MCF 10A (cell line): ENCODE measurements at regions of chr12 and their contacts with region 1.

Region 1: DNA sequence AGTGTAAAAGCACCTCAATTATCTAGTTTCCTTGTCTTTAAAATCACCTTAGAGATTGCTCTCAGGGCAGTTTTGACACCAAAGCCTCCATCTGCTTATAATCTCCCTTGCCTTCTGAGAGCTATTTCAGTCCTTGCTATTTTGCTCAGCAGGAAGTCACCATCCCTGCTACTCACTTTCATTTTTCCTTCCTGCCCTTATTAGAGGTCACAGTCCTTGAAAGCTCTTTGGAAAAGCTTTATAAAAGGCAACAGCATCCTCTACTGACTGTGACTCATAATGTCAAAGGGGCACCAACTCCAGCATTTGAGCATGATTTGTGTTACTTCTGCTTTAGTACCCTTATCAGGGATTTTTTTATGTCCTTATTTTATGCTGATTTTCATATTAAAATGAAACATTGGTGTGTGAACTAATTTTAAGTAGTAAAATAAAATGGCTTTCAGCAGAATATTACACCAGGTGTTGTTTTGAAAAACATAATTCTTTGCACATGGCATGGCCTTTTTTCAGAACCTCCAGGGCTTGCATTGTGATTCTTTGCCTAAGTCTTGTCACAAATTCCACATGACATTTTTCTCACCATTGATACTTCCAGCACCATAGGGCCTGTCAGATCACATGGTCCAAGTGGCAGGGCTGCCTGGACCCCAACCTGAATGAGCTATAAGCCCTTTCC is 213.0 kb downstream of the ADAMTS20 start:
- DNase-seq: peak; percentile 64
- H3K4me3 Mint-ChIP-seq: no peak overlapping the region
- H3K27ac Mint-ChIP-seq: no peak overlapping the region
- H3K4me1 Mint-ChIP-seq: peaks cover 12% of the 10 kb centered on the region
- H3K27me3 Mint-ChIP-seq: no peaks in the 10 kb centered on the region
- CTCF ChIP-seq: peak; percentile 55

Region 2: DNA sequence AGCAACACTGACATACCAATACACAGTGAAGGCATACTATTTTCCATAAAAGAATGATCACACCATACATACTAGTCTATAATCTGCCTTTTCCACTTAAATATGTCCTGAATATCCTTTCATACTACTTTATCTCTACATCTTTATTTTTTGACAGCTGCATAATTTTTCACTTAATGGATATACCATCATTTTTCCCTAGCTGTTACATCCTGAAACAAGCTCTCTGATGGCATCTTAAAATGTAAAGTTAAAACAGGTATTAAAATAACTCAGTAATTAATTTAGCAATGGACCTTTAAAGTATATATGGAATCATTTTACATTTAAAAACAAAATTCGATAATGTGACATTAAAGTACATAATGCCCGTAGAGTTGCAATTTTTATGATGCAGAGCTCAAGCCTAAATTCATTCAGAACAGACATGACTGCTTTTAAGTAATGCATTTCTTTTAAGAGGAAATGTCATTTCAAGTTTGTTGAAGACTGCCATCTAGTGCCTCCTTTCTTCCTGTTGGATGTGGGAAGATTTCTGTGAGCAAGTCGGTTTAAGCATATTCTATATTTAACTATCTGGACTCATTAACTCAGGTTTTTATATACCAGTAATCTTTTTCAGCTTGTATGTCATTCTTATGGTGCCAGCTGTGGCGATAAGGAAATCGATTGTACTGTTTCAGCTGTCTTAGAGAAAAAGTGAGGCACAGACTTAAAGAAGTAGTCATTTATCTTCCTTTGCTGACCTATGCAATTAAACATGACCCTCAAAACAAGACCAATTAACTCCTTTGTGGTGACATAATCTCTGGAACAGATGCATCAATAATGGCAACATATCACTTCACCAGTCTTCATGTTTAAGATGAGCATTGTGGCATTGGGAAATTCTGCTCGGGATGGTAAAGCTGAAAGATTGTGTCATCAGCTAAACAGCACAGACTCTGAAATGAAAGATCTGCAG is 769.8 kb before region 1 on chr12:
- CTCF ChIA-PET with region 1: interaction called, 9 read pairs
- POLR2A ChIA-PET with region 1: no interaction called
- intact Hi-C with region 1: loop called (anchors 5 kb)
- DNase-seq: peak; percentile 58
- H3K4me3 Mint-ChIP-seq: no peak overlapping the region
- H3K27ac Mint-ChIP-seq: no peak overlapping the region
- H3K4me1 Mint-ChIP-seq: peaks cover 6% of the 10 kb centered on the region
- H3K27me3 Mint-ChIP-seq: no peaks in the 10 kb centered on the region
- CTCF ChIP-seq: peak; percentile 57

Region 3: DNA sequence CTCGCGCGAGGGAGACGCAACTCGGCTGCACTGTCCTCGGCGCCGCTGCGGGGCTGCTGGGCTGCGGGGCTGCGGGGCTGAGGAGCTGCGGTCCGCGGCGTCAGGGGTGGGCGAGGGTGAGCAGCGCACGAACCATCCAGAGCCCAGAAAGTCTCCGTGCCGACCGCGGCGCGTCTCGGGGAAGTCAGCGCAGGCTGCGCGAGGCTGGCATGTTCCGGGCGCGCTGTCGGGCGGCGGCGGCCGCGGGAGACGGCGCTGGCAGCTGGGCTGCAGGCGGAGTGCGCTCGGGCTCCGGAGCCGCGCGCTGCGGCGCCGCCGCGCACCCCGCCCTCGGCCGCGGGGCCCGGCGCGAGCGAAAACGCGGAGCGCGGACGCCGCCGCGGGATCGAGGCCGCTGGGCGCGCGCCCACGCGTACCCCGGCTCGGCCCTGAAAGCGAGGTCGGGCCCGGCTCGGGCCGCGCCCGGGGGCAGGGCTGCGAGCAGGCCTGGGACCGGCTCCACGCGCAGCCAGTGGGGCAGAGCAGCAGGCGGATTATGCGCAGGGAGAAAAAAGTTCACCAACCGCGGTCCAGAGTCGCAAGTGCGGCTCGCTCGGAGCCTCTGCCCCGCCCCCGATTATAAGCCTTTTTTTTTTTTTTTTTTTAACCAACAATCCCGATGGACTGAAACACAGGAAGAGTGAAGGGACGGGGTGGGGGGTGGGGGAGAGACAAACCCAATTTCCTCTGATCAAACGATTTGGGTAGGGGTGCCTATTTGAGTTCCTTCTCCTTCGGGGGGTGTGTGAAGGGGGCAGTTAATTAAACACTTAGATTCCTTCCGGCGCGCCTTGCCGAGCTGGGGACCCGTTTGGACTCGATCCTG is 749.3 kb before region 1 on chr12 and contains the start of gene PRICKLE1:
- CTCF ChIA-PET with region 1: interaction called, 4 read pairs
- POLR2A ChIA-PET with region 1: interaction called, 3 read pairs
- intact Hi-C with region 1: loop called (anchors 1 kb)
- DNase-seq: peak; percentile 54
- H3K4me3 Mint-ChIP-seq: peak within 1 kb of the TSS; percentile 81
- H3K27ac Mint-ChIP-seq: peak within 1 kb of the TSS; percentile 76
- H3K4me1 Mint-ChIP-seq: peaks cover 30% of the 10 kb centered on the region
- H3K27me3 Mint-ChIP-seq: no peaks in the 10 kb centered on the region
- CTCF ChIP-seq: no peak
- total RNA-seq, gene PRICKLE1: 7.9 and 14.1 TPM in 2 replicates

Region 4: GRCh38 chr12:42790761-42791151 is 548.2 kb before region 1 on chr12:
- CTCF ChIA-PET with region 1: no interaction called
- POLR2A ChIA-PET with region 1: no interaction called
- intact Hi-C with region 1: loop called (anchors 10 kb)
- DNase-seq: peak; percentile 39
- H3K4me3 Mint-ChIP-seq: no peak overlapping the region
- H3K27ac Mint-ChIP-seq: no peak overlapping the region
- H3K4me1 Mint-ChIP-seq: peaks cover 20% of the 10 kb centered on the region
- H3K27me3 Mint-ChIP-seq: no peaks in the 10 kb centered on the region
- CTCF ChIP-seq: no peak

Region 5: GRCh38 chr12:43273467-43273866 is 65.5 kb before region 1 on chr12:
- CTCF ChIA-PET with region 1: no interaction called
- POLR2A ChIA-PET with region 1: no interaction called
- intact Hi-C with region 1: no loop called
- DNase-seq: peak; percentile 10
- H3K4me3 Mint-ChIP-seq: no peak overlapping the region
- H3K27ac Mint-ChIP-seq: no peak overlapping the region
- H3K4me1 Mint-ChIP-seq: peaks cover 17% of the 10 kb centered on the region
- H3K27me3 Mint-ChIP-seq: no peaks in the 10 kb centered on the region
- CTCF ChIP-seq: no peak

Region 6: DNA sequence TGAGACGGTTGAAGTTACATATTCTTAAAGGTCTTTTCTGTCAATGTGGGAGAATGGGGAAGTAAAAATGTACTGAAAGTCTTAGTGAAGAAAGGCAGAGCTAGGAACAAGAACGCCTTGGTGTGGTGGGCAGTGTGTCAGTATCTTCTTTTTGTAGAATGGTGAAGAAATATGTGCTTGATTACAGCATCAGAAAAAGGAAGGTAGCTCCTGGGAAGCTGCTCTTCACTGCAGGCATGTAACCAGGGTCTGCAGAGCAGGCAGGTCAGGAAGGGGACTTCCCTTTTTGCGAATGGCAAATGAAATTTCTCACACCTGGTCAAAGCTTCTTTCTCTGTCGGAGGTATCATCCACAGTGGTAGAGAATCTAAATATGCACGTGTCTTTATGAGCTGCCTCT is 13.2 kb before region 1 on chr12:
- CTCF ChIA-PET with region 1: interaction called, 13 read pairs
- POLR2A ChIA-PET with region 1: no interaction called
- intact Hi-C with region 1: no loop called
- DNase-seq: no peak
- H3K4me3 Mint-ChIP-seq: no peak overlapping the region
- H3K27ac Mint-ChIP-seq: no peak overlapping the region
- H3K4me1 Mint-ChIP-seq: no peaks in the 10 kb centered on the region
- H3K27me3 Mint-ChIP-seq: no peaks in the 10 kb centered on the region
- CTCF ChIP-seq: no peak

Region 7: GRCh38 chr12:43349863-43350262 is 10.9 kb after region 1 on chr12:
- CTCF ChIA-PET with region 1: interaction called, 16 read pairs
- POLR2A ChIA-PET with region 1: no interaction called
- intact Hi-C with region 1: no loop called
- DNase-seq: peak; percentile 29
- H3K4me3 Mint-ChIP-seq: no peak overlapping the region
- H3K27ac Mint-ChIP-seq: no peak overlapping the region
- H3K4me1 Mint-ChIP-seq: no peaks in the 10 kb centered on the region
- H3K27me3 Mint-ChIP-seq: peaks cover 46% of the 10 kb centered on the region
- CTCF ChIP-seq: peak; percentile 50

Region 8: GRCh38 chr12:43459285-43459684 is 120.3 kb after region 1 on chr12:
- CTCF ChIA-PET with region 1: no interaction called
- POLR2A ChIA-PET with region 1: no interaction called
- intact Hi-C with region 1: no loop called
- DNase-seq: no peak
- H3K4me3 Mint-ChIP-seq: no peak overlapping the region
- H3K27ac Mint-ChIP-seq: no peak overlapping the region
- H3K4me1 Mint-ChIP-seq: no peaks in the 10 kb centered on the region
- H3K27me3 Mint-ChIP-seq: peaks cover 25% of the 10 kb centered on the region
- CTCF ChIP-seq: no peak

Region 9: DNA sequence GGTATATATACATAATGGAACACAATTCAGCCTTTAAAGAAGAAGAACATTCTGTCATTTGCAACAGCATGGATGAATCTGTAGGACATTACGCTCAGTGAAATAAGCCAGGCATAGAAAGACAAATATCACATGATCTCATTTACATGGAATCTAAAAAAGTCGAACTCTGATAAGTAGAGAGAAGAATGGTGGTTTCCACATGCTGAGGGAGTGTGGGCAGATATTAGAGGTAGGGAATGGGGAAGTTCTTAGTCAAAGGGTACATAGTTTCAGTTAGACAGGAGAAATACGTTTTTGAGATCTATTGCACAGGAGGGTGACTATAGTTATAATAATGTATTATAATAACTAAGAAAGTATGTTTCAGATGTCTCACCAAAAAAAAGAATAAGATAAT is 141.6 kb after region 1 on chr12:
- CTCF ChIA-PET with region 1: no interaction called
- POLR2A ChIA-PET with region 1: no interaction called
- intact Hi-C with region 1: no loop called
- DNase-seq: no peak
- H3K4me3 Mint-ChIP-seq: no peak overlapping the region
- H3K27ac Mint-ChIP-seq: no peak overlapping the region
- H3K4me1 Mint-ChIP-seq: no peaks in the 10 kb centered on the region
- H3K27me3 Mint-ChIP-seq: peaks cover 28% of the 10 kb centered on the region
- CTCF ChIP-seq: no peak

Region 10: GRCh38 chr12:43551971-43552559 is 213.1 kb after region 1 on chr12 and contains the start of gene ADAMTS20:
- CTCF ChIA-PET with region 1: no interaction called
- POLR2A ChIA-PET with region 1: no interaction called
- intact Hi-C with region 1: no loop called
- DNase-seq: no peak
- H3K4me3 Mint-ChIP-seq: no peak within 1 kb of the TSS
- H3K27ac Mint-ChIP-seq: no peak within 1 kb of the TSS
- H3K4me1 Mint-ChIP-seq: no peaks in the 10 kb centered on the region
- H3K27me3 Mint-ChIP-seq: peaks cover 24% of the 10 kb centered on the region
- CTCF ChIP-seq: no peak
- total RNA-seq, gene ADAMTS20: not detected in 2 replicates